ENCODE measurements at regions of chr18 and their contacts with region 1.

Region 1: DNA sequence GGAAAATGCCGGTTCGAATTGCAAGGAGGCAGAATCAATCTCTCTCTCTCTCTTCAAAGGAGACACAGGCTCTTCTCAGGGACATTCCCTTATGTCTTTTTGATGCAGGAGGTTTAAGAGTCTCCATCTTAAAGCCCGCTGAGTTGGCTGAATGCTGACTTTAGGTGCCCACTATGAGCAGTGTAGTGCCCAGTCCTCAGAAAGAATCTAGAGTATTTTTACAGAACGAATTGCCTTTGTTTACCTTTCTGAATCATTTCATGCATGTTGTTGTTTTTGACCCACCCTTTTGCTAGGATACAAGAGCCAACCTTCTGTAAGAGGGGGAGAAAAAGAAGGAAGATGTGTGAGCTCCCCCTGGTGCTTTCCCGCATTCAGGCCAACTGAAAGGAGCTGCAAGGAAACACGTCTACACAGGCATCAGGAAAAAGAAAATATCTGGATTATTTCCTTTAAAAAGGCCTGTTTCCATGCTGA is 193.5 kb upstream of the TCF4 start:
- DNase-seq: peak; percentile 74
- H3K4me3 ChIP-seq: no peak overlapping the region; a peak in 1 of 4 replicates
- H3K27ac ChIP-seq: peak overlapping the region in 1 of 2 experiments; percentile 50; a peak in 2 of 4 replicates
- H3K4me1 ChIP-seq: peaks cover 0 to 10% of the 10 kb centered on the region in 2 experiments; a peak in 3 of 4 replicates
- H3K27me3 ChIP-seq: no peaks in the 10 kb centered on the region
- CTCF ChIP-seq: peak; percentile 79
- EP300 ChIP-seq: no peak
- RAD21 ChIP-seq: peak; percentile 92

Region 2: DNA sequence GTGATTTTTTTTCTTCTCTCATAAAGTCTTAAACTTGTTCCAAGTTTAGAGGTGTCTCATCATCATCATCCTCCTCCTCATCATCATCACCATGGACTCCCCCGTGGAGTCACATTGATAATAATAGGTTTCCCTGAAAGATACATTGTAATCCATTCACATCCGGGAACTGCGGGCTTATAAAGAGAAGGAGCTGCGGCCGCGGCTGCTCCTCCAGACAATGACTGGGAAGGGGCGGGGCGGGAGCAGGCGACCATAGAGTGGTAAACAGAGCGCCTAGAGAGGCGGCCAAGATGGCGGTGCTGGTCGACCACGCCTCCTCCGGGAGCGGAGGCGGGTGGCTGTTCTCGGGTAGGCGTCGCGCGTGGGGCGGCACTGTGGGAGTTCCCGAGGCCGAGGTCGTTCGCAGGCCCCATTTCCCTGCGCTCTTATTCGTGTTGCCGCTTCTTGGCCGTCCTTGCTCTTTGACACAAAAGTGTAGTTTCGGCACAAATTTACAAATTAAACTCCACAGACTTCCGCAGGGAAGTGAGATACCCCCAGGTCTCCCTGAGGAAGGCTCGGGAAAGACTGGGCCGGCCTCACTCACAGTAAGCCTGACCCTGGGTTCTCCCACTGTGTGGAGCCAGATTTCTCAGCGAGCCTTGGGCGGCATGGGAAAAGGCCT is 191.8 kb before region 1 on chr18:
- CTCF ChIA-PET with region 1: interaction called, 3 read pairs
- POLR2A ChIA-PET with region 1: interaction called, 15 read pairs
- DNase-seq: peak; percentile 93
- H3K4me3 ChIP-seq: peak overlapping the region; percentile 59 to 92
- H3K27ac ChIP-seq: peak overlapping the region; percentile 87 to 98
- H3K4me1 ChIP-seq: peaks cover 0 to 5% of the 10 kb centered on the region in 2 experiments; a peak in 2 of 4 replicates
- H3K27me3 ChIP-seq: no peaks in the 10 kb centered on the region
- CTCF ChIP-seq: no peak
- EP300 ChIP-seq: 0 out of 4 replicates have a peak, but pooled peaks of 1 of the 2 experiments have one; percentile 4
- RAD21 ChIP-seq: peak; percentile 31